Sciatic nerve (tissue), 2 donors: ENCODE measurements at regions of chr12 and their contacts with region 1.

Region 1: DNA sequence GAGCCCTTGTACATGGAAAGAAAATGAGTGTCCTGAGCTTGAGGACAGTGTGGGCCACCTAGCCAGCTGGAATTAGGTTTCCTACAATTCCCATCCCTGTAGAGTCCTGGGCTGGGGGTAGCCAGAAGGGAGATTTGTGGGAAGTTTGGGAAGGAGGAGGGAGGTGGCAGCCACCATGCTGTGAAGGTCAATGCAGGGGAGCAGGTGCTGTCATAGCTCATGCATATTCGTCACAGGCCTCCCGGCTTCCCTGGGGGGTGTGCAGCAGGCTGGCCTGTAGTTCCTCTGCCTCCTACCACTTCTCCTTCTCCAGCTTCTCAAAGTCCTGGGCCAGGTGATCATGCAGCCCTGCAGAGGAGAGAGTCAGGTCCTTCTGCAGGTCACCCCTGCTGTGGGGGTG is 121.3 kb downstream of the TBX3 start:
- DNase-seq: no peak
- ATAC-seq: no peak

Region 2: DNA sequence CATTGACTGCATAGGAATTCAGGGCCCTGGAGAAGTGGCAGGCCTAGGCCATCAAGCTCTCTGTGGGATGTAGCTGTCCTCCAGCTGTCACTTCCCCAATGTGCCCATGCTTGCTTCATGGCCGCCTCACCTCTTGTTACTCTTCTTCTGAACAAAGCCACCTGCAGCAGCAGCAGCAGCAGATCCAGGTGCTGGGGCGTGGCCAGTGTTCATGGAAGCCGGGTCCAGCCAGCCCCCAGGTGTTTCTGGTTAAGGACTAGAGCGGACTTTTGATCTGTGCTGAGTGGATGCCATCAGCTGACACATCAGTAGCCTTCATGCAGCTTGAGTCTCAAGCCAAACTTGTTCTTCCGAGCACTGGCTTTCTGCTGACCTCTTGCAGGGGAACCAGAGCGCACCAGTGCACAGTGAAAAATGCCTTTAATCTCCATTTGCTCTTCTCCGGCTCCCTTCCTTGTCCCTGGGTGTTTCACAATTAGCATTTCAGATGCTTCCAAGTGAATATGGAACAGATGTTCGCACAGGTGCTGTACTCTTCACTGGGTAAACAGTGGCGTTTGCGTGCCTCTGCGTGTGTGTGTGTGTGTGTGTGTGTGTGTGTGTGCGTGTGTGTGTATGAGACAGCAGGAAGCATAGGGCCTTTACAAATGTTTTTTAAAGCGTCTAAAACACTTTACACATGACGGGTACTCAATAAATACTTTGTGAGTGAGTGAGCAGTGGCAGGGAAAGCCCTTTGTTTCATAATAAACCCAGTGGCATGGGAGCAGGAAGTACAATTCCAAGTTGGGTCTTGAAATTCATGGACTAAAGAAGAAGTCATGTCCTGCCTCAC is 1321.2 kb before region 1 on chr12:
- intact Hi-C with region 1: loop called (anchors 5 kb)
- DNase-seq: no peak
- ATAC-seq: peak; percentile 62

Region 3: GRCh38 chr12:114457620-114458019 is 105.0 kb before region 1 on chr12:
- intact Hi-C with region 1: no loop called
- DNase-seq: no peak
- ATAC-seq: no peak